Posterior vena cava (tissue), 2 donors: ENCODE measurements at regions of chr2 and their contacts with region 1.

Region 1: GRCh38 chr2:233443468-233444183 is 89.3 kb downstream of the DGKD start:
- DNase-seq: peak; percentile 90

Region 2: DNA sequence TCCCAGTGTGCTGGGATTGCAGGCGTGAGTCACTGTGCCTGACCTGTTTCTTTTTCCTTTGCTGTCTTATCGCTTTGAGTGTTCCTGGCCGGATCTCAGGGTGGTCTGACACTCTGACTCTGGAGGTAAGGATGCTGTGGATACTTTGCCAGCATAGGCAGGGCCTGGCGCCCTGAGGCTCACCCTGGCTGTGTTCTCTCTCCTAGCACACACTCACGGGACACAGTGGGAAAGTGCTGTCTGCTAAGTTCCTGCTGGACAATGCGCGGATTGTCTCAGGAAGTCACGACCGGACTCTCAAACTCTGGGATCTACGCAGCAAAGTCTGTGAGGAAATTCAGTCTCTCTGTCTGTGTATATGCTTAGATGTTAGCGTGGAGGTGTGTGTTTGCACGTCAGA is 154.0 kb before region 1 on chr2:
- intact Hi-C with region 1: loop called in 1 of 2 experiments (anchors 5 kb)
- DNase-seq: no peak

Region 3: GRCh38 chr2:233363744-233364235 is 79.8 kb before region 1 on chr2:
- intact Hi-C with region 1: loop called (anchors 5 to 10 kb)
- DNase-seq: no peak